ENCODE measurements at regions of chr6 and their contacts with region 1.

Region 1: GRCh38 chr6:3023663-3024483 is 24.2 kb downstream of the NQO2 start:
- DNase-seq: peak; percentile 71 to 89 (median 77)
- H3K4me3 ChIP-seq: peak overlapping the region; percentile 88
- H3K4me3 Mint-ChIP-seq: peak overlapping the region; percentile 78 to 93 (median 90)
- H3K27ac ChIP-seq: peak overlapping the region; percentile 90
- H3K27ac Mint-ChIP-seq: peak overlapping the region; percentile 77 to 99 (median 93)
- H3K4me1 ChIP-seq: peaks cover 47% of the 10 kb centered on the region
- H3K4me1 Mint-ChIP-seq: peaks cover 47 to 65% (median 55%) of the 10 kb centered on the region in 3 donors
- H3K27me3 ChIP-seq: no peaks in the 10 kb centered on the region
- H3K27me3 Mint-ChIP-seq: peaks cover 0 to 1% of the 10 kb centered on the region in 2 donors

Region 2: DNA sequence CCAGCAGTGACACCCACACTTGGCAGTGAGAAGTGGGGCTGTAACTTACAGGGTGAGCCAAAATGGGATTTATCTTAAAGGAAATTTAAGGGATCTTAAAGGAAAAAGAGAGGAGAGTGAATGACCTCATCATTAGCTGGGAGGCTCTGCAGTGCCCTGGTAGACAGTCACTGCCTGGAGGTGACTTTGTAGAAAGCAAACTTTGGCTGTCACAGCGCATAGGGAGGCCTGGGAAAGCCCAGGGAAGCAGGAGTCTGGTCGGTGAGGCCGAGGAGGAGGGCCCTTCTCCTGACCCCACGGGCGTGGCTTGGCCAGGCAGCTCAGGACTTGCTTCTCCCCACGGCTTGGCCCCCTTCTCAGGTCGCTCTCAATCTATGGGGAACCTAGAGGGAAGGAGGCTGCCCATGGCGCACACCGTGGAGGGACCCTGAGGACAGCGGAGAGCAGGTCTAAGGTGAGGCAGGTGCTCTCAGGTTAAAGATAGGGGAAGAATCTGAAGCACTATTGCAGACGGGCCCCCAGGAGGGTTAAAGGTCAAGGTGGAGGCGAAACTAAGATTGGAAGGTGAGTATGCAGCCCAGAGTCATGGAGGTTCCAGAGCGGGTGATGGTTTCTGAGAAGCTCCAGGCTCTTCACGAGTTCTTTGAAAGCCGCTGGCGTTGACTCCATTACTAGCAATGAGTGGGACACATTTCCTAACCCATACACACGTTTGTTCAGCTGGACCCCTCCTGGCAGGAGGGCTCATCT is 28.8 kb after region 1 on chr6:
- CTCF ChIA-PET with region 1: interaction called, 5 read pairs
- POLR2A ChIA-PET with region 1: interaction called, 12 read pairs
- DNase-seq: no peak
- H3K4me3 ChIP-seq: peak overlapping the region; percentile 59
- H3K4me3 Mint-ChIP-seq: peak overlapping the region; percentile 60 to 92 (median 80)
- H3K27ac ChIP-seq: peak overlapping the region; percentile 69
- H3K27ac Mint-ChIP-seq: peak overlapping the region in 5 of 8 donors; percentile 13 to 86 (median 63)
- H3K4me1 ChIP-seq: peaks cover 7% of the 10 kb centered on the region
- H3K4me1 Mint-ChIP-seq: peaks cover 9 to 30% (median 10%) of the 10 kb centered on the region in 3 donors
- H3K27me3 ChIP-seq: no peaks in the 10 kb centered on the region
- H3K27me3 Mint-ChIP-seq: peaks cover 5 to 8% of the 10 kb centered on the region in 2 donors